Activated CD4-positive, alpha-beta memory T cell treated with anti-CD3 and anti-CD28 coated beads, Interleukin-2, amount 10 ng/mL, durations not matched to agents 7 days and 5 days (primary cell): ENCODE measurements at regions of chr17 and their contacts with region 1.

Region 1: DNA sequence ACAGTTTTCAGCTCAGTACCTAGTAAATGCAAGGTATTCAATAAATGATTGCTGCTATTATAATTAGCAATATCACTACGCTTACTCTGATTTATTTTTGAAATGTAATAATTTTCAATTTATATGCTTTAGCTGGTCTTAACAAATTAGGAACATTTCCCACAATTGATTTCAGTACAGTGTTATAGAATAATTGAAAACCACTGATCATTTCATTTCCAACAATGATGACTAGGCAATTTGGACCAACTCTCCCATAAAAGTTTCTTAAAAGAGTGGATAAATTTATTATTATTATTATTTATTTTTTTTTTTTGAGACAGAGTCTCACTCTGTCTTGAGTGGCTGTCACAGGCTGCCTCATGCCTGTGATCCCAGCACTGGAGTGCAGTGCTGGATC is 41.1 kb downstream of the VMP1 start:
- DNase-seq: no peak
- H3K4me3 Mint-ChIP-seq: no peak overlapping the region
- H3K27ac Mint-ChIP-seq: no peak overlapping the region
- H3K4me1 Mint-ChIP-seq: peaks cover 41% of the 10 kb centered on the region
- H3K27me3 Mint-ChIP-seq: no peaks in the 10 kb centered on the region

Region 2: DNA sequence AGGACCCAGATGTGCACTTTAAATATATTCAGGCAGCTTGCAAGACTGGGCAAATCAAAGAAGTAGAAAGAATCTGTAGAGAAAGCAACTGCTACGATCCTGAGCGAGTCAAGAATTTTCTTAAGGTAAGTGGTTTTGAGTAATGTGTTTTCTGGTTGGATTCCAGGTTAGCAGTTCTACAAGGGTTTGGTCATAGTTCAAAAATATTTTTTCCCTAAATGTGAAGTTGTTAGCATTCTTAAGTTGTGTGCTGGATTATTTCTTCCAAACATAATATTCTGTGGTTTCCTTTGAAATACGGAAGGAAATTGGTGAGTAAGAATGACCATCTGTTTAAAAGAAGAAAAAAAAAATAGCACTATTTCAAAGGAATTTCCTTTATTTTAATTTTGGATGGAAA is 79.8 kb before region 1 on chr17:
- CTCF ChIA-PET with region 1: no interaction called
- POLR2A ChIA-PET with region 1: no interaction called
- DNase-seq: no peak
- H3K4me3 Mint-ChIP-seq: no peak overlapping the region
- H3K27ac Mint-ChIP-seq: peak overlapping the region; percentile 40
- H3K4me1 Mint-ChIP-seq: peaks cover 31% of the 10 kb centered on the region
- H3K27me3 Mint-ChIP-seq: no peaks in the 10 kb centered on the region

Region 3: DNA sequence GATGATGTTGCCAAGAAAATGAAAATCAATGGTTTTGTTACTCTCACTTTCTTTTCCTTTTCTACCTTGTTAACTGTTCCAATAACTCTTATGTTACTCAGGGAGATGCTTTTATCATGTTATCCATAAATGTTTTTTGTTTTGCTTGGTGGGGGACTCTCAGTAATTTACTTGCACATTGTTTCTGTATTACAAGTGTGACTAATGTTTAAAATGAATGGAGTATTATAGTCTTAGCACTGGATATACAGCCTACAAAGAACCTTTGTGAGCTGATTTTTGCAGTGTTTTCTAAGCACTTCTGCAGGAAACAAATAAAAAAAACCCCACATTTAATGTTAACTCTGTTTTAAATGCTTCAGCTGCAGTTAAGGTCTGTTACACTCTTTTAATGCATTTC is 29.1 kb before region 1 on chr17:
- CTCF ChIA-PET with region 1: no interaction called
- POLR2A ChIA-PET with region 1: no interaction called
- DNase-seq: no peak
- H3K4me3 Mint-ChIP-seq: no peak overlapping the region
- H3K27ac Mint-ChIP-seq: no peak overlapping the region
- H3K4me1 Mint-ChIP-seq: peaks cover 10% of the 10 kb centered on the region
- H3K27me3 Mint-ChIP-seq: no peaks in the 10 kb centered on the region

Region 4: GRCh38 chr17:60036796-60037612 is 288.4 kb after region 1 on chr17:
- CTCF ChIA-PET with region 1: interaction called, 11 read pairs
- POLR2A ChIA-PET with region 1: no interaction called
- DNase-seq: peak; percentile 75
- H3K4me3 Mint-ChIP-seq: no peak overlapping the region
- H3K27ac Mint-ChIP-seq: no peak overlapping the region
- H3K4me1 Mint-ChIP-seq: peaks cover 7% of the 10 kb centered on the region
- H3K27me3 Mint-ChIP-seq: peaks cover 22% of the 10 kb centered on the region